ENCODE measurements at regions of chr6 and their contacts with region 1.

Region 1: DNA sequence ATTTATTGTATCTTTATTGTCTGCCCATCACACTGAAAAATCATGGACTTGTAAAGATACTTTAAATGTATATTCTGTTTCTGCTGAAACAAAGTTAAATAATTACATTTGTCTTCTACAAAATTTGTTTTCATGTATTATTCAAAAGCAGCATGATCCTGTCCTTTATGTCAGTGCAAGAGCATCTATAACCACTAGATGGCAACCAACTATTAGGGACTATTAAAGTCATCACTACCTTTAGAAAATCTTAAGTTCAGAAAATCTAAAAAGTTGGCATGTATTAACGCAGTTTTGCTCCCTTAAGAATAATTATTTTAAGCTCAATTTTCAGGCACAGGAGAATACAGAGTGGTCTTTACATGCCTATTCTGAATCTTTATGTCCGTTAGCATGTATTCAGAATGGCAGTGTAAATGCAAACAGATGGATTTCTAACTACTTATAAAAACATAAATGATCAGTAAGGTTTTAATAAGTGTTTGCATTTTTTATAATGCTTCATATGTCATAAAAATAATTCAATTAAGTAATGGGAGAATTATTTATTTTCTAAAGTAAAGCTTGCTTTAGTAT is 17.8 kb downstream of the TMEM30A start:
- DNase-seq: peak in 1 of 2 experiments; percentile 39
- H3K4me3 ChIP-seq: no peak overlapping the region
- H3K27ac ChIP-seq: no peak overlapping the region
- H3K4me1 ChIP-seq: peaks cover 7% of the 10 kb centered on the region; the same call in 1 of the 2 replicates
- H3K27me3 ChIP-seq: no peaks in the 10 kb centered on the region
- CTCF ChIP-seq: peak; percentile 84

Region 2: DNA sequence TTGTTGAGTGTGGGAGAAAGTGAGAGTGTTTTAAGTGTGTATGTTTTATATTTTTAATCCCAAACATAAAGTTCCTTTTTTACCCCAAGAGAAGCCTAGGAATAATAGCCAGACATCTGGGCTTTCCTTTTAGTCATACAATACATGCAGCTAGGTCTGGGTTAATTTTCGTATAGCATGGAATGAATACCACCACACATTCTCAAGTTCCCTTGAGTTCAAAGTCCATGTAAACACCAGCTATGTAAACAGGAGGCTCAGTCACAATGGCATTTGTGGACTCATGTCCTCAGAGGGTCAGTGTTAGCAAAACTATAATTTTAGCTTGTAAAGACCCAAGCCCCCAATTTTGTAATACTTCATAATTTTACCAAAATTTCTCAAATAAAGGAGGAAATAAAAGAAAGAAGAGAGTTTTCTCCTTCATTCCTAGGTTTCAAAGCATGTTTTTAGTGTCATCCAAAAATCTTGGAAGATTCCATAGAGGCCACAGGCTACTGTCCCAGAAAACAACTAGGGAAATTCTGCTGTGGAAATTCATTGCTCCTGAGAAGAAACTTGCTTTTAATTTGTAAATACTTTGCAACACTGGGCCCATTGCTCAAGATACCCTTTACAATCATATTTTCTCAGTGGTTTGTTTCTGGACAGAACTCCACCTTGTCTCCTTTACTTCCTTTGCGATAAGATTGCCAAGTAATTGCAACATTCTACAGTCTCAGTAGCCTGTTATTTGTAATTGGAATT is 732.2 kb before region 1 on chr6:
- CTCF ChIA-PET with region 1: no interaction called
- POLR2A ChIA-PET with region 1: no interaction called
- intact Hi-C with region 1: no loop called
- DNase-seq: no peak
- H3K4me3 ChIP-seq: no peak overlapping the region
- H3K27ac ChIP-seq: no peak overlapping the region
- H3K4me1 ChIP-seq: no peaks in the 10 kb centered on the region
- H3K27me3 ChIP-seq: no peaks in the 10 kb centered on the region
- CTCF ChIP-seq: no peak

Region 3: DNA sequence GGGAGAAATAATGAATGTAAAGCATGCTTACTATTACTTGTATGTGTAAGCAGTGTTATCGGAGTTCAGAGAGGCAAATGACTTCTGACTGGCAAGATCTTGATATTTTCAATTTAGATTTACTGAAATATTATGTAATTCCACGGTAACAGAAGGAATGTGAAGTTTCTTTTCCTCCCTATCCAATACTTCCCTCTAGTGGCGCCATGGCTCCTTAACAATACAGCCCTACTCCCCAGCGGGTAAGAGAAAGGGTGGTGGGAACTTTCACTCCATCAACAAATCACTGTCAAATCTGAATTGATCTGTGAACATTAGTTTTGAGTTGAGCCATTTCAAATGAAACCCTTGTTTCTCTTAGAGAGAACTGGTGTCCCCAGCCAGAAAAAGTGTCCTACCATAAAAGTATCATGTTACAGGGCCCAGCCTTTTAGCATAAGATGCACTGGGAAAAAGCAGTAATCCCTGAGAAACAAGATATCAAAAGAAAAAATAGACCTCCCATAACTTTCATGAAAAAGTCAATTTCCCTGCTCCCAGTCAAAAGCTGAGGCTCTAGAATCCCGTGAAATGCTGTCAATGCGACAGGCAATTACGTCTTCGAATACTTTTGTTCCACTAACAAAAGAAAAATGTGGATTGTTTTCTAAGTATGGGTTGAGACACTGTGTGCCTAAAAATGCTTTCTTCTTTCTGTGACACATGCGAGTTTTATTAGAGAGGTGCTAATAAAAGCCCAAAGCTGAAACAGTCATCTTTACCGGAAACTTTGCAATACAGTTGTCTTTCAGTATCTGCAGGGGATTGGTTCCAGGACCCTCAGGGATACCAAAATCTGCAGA is 36.1 kb before region 1 on chr6:
- CTCF ChIA-PET with region 1: no interaction called
- POLR2A ChIA-PET with region 1: interaction called, 11 read pairs
- intact Hi-C with region 1: no loop called
- DNase-seq: peak in 1 of 2 experiments; percentile 34
- H3K4me3 ChIP-seq: no peak overlapping the region
- H3K27ac ChIP-seq: no peak overlapping the region
- H3K4me1 ChIP-seq: no peaks in the 10 kb centered on the region
- H3K27me3 ChIP-seq: no peaks in the 10 kb centered on the region
- CTCF ChIP-seq: peak; percentile 77

Region 4: GRCh38 chr6:75243333-75244062 is 23.3 kb before region 1 on chr6 and contains the start of gene COX7A2:
- CTCF ChIA-PET with region 1: no interaction called
- POLR2A ChIA-PET with region 1: interaction called, 6 read pairs
- intact Hi-C with region 1: loop called (anchors 1 kb)
- DNase-seq: peak; percentile 84 to 93
- H3K4me3 ChIP-seq: peak within 1 kb of the TSS; percentile 84
- H3K27ac ChIP-seq: peak within 1 kb of the TSS; percentile 82
- H3K4me1 ChIP-seq: peaks cover 24% of the 10 kb centered on the region
- H3K27me3 ChIP-seq: no peaks in the 10 kb centered on the region
- CTCF ChIP-seq: no peak
- total RNA-seq, gene COX7A2: 484 and 524 TPM in 2 replicates

Region 5: GRCh38 chr6:75284632-75285286 is 18.0 kb after region 1 on chr6 and contains the start of gene TMEM30A:
- CTCF ChIA-PET with region 1: no interaction called
- POLR2A ChIA-PET with region 1: no interaction called
- intact Hi-C with region 1: loop called (anchors 2 kb)
- DNase-seq: peak; percentile 97 to 98
- H3K4me3 ChIP-seq: peak within 1 kb of the TSS; percentile 95
- H3K27ac ChIP-seq: peak within 1 kb of the TSS; percentile 85
- H3K4me1 ChIP-seq: peaks cover 54% of the 10 kb centered on the region
- H3K27me3 ChIP-seq: no peaks in the 10 kb centered on the region
- CTCF ChIP-seq: 0 out of 2 replicates have a peak, but pooled peaks have one; percentile 3
- total RNA-seq, gene TMEM30A: 78.2 and 122 TPM in 2 replicates

Region 6: GRCh38 chr6:75296811-75297779 is 30.3 kb after region 1 on chr6:
- CTCF ChIA-PET with region 1: interaction called, 3 read pairs
- POLR2A ChIA-PET with region 1: no interaction called
- intact Hi-C with region 1: loop called (anchors 1 kb)
- DNase-seq: peak in 1 of 2 experiments; percentile 48
- H3K4me3 ChIP-seq: no peak overlapping the region
- H3K27ac ChIP-seq: no peak overlapping the region
- H3K4me1 ChIP-seq: no peaks in the 10 kb centered on the region; the same call in 1 of the 2 replicates
- H3K27me3 ChIP-seq: no peaks in the 10 kb centered on the region
- CTCF ChIP-seq: peak; percentile 89

Region 7: GRCh38 chr6:75882734-75883133 is 615.9 kb after region 1 on chr6:
- CTCF ChIA-PET with region 1: no interaction called
- POLR2A ChIA-PET with region 1: no interaction called
- intact Hi-C with region 1: no loop called
- DNase-seq: peak in 1 of 2 experiments; percentile 43
- H3K4me3 ChIP-seq: no peak overlapping the region
- H3K27ac ChIP-seq: no peak overlapping the region
- H3K4me1 ChIP-seq: peaks cover 11% of the 10 kb centered on the region
- H3K27me3 ChIP-seq: no peaks in the 10 kb centered on the region
- CTCF ChIP-seq: no peak